ENCODE measurements at regions of chr1 and their contacts with region 1.

Region 1: GRCh38 chr1:180640531-180640949 is 8.7 kb downstream of the XPR1 start:
- DNase-seq: peak; percentile 68 to 74
- H3K4me3 ChIP-seq: no peak overlapping the region
- H3K4me3 Mint-ChIP-seq: peak overlapping the region; percentile 19
- H3K27ac Mint-ChIP-seq: peak overlapping the region; percentile 53
- H3K4me1 ChIP-seq: peaks cover 47% of the 10 kb centered on the region
- H3K4me1 Mint-ChIP-seq: peaks cover 34% of the 10 kb centered on the region
- H3K27me3 ChIP-seq: no peaks in the 10 kb centered on the region
- H3K27me3 Mint-ChIP-seq: no peaks in the 10 kb centered on the region
- CTCF ChIP-seq: no peak

Region 2: GRCh38 chr1:180594723-180595122 is 45.8 kb before region 1 on chr1:
- CTCF ChIA-PET with region 1: no interaction called
- POLR2A ChIA-PET with region 1: no interaction called
- intact Hi-C with region 1: no loop called
- DNase-seq: no peak
- H3K4me3 ChIP-seq: no peak overlapping the region
- H3K4me3 Mint-ChIP-seq: no peak overlapping the region
- H3K27ac Mint-ChIP-seq: no peak overlapping the region
- H3K4me1 ChIP-seq: peaks cover 22% of the 10 kb centered on the region
- H3K4me1 Mint-ChIP-seq: peaks cover 23% of the 10 kb centered on the region
- H3K27me3 ChIP-seq: no peaks in the 10 kb centered on the region
- H3K27me3 Mint-ChIP-seq: no peaks in the 10 kb centered on the region
- CTCF ChIP-seq: no peak

Region 3: GRCh38 chr1:180728472-180729106 is 88.0 kb after region 1 on chr1:
- CTCF ChIA-PET with region 1: no interaction called
- POLR2A ChIA-PET with region 1: no interaction called
- intact Hi-C with region 1: loop called (anchors 1 kb)
- DNase-seq: no peak
- H3K4me3 ChIP-seq: no peak overlapping the region
- H3K4me3 Mint-ChIP-seq: no peak overlapping the region
- H3K27ac Mint-ChIP-seq: peak overlapping the region; percentile 90
- H3K4me1 ChIP-seq: peaks cover 17% of the 10 kb centered on the region
- H3K4me1 Mint-ChIP-seq: peaks cover 7% of the 10 kb centered on the region
- H3K27me3 ChIP-seq: no peaks in the 10 kb centered on the region
- H3K27me3 Mint-ChIP-seq: no peaks in the 10 kb centered on the region
- CTCF ChIP-seq: no peak

Region 4: GRCh38 chr1:180814859-180815587 is 174.5 kb after region 1 on chr1:
- CTCF ChIA-PET with region 1: no interaction called
- POLR2A ChIA-PET with region 1: no interaction called
- intact Hi-C with region 1: loop called (anchors 1 kb)
- DNase-seq: peak in 1 of 2 experiments; percentile 26
- H3K4me3 ChIP-seq: no peak overlapping the region
- H3K4me3 Mint-ChIP-seq: peak overlapping the region; percentile 41
- H3K27ac Mint-ChIP-seq: no peak overlapping the region
- H3K4me1 ChIP-seq: peaks cover 35% of the 10 kb centered on the region
- H3K4me1 Mint-ChIP-seq: peaks cover 19% of the 10 kb centered on the region
- H3K27me3 ChIP-seq: no peaks in the 10 kb centered on the region
- H3K27me3 Mint-ChIP-seq: no peaks in the 10 kb centered on the region
- CTCF ChIP-seq: no peak